ENCODE measurements at regions of chr19 and their contacts with region 1.

Region 1: GRCh38 chr19:41310033-41310758 is at the start of gene CCDC97:
- DNase-seq: peak; percentile 78 to 96 (median 90)
- ATAC-seq: peak; percentile 61
- H3K4me3 ChIP-seq: peak within 1 kb of the TSS; percentile 66 to 91
- H3K4me3 Mint-ChIP-seq: peak within 1 kb of the TSS; percentile 97
- H3K27ac ChIP-seq: peak within 1 kb of the TSS; percentile 88 to 93
- H3K27ac Mint-ChIP-seq: peak within 1 kb of the TSS; percentile 98
- H3K4me1 ChIP-seq: peaks cover 58% of the 10 kb centered on the region
- H3K4me1 Mint-ChIP-seq: peaks cover 74% of the 10 kb centered on the region
- H3K27me3 ChIP-seq: no peaks in the 10 kb centered on the region
- H3K27me3 Mint-ChIP-seq: no peaks in the 10 kb centered on the region
- CTCF ChIP-seq: no peak
- total RNA-seq, gene CCDC97: 32.0 to 33.5 TPM

Region 2: DNA sequence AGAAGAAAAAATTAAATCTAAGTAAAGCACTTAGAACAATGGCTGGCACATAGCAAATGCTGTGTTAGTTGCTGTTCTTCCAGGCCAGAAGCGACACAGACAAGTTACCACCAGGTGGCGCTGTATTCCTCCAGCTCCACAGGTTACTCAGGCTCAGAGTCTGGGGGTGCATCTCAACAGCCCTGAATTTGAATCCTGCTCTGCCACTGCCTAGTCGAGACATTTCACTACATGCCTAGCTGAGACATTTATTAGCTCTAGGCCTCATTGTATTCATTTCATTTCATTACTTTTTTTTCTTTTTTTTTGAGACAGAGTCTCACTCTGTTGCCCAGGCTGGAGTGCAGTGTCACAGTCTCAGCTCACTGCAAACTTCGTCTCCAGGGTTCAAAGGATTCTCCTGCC is 335.6 kb before region 1 on chr19:
- CTCF ChIA-PET with region 1: no interaction called
- POLR2A ChIA-PET with region 1: no interaction called
- intact Hi-C with region 1: loop called (anchors 2 kb)
- DNase-seq: peak; percentile 61 to 90 (median 80)
- ATAC-seq: peak; percentile 72
- H3K4me3 ChIP-seq: no peak overlapping the region
- H3K4me3 Mint-ChIP-seq: no peak overlapping the region
- H3K27ac ChIP-seq: no peak overlapping the region
- H3K27ac Mint-ChIP-seq: no peak overlapping the region
- H3K4me1 ChIP-seq: peaks cover 22% of the 10 kb centered on the region
- H3K4me1 Mint-ChIP-seq: peaks cover 29% of the 10 kb centered on the region
- H3K27me3 ChIP-seq: no peaks in the 10 kb centered on the region
- H3K27me3 Mint-ChIP-seq: peaks cover 10% of the 10 kb centered on the region
- CTCF ChIP-seq: peak; percentile 92

Region 3: DNA sequence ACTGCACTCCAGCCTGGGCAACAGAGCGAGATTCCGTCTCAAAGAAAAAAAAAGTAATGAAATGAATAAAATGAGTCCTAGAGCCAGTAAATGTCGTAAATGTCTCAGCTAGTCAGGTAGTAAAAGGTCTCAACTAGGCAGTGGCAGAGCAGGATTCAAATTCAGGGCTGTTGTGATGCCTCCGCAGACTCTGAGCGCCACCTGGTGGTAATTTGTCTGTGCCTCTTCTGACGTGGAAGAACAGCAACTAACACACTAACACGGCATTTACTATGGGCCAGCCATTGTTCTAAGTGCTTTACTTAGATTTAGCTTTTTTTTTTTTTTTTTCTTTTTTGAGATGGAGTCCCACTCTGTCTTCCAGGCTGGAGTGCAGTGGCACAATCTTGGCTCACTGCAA is 165.8 kb before region 1 on chr19:
- CTCF ChIA-PET with region 1: interaction called, 3 read pairs
- POLR2A ChIA-PET with region 1: no interaction called
- intact Hi-C with region 1: loop called in 1 of 2 experiments (anchors 10 kb)
- DNase-seq: peak; percentile 79 to 94 (median 90)
- ATAC-seq: peak; percentile 95
- H3K4me3 ChIP-seq: no peak overlapping the region
- H3K4me3 Mint-ChIP-seq: no peak overlapping the region
- H3K27ac ChIP-seq: no peak overlapping the region
- H3K27ac Mint-ChIP-seq: no peak overlapping the region
- H3K4me1 ChIP-seq: no peaks in the 10 kb centered on the region
- H3K4me1 Mint-ChIP-seq: peaks cover 2% of the 10 kb centered on the region
- H3K27me3 ChIP-seq: peaks cover 0 to 6% of the 10 kb centered on the region in 2 experiments
- H3K27me3 Mint-ChIP-seq: peaks cover 10% of the 10 kb centered on the region
- CTCF ChIP-seq: peak; percentile 81

Region 4: DNA sequence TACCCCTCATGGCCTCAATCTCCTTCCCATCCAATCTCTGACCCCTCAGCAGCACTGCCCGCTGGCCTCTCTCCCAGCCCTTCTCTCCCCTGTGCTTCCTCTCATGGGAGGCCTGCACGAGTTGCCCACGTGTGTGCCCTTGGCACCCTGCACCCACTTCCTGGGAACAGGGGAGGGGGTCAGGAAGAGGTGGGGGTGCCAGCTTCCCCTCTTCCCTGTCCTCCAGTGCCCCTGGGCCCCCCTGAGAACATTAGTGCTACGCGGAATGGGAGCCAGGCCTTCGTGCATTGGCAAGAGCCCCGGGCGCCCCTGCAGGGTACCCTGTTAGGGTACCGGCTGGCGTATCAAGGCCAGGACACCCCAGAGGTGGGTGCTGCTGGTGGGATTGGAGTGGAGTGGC is 72.0 kb before region 1 on chr19:
- CTCF ChIA-PET with region 1: no interaction called
- POLR2A ChIA-PET with region 1: no interaction called
- intact Hi-C with region 1: no loop called
- DNase-seq: no peak
- ATAC-seq: no peak
- H3K4me3 ChIP-seq: no peak overlapping the region
- H3K4me3 Mint-ChIP-seq: no peak overlapping the region
- H3K27ac ChIP-seq: no peak overlapping the region
- H3K27ac Mint-ChIP-seq: no peak overlapping the region
- H3K4me1 ChIP-seq: no peaks in the 10 kb centered on the region
- H3K4me1 Mint-ChIP-seq: no peaks in the 10 kb centered on the region
- H3K27me3 ChIP-seq: no peaks in the 10 kb centered on the region
- H3K27me3 Mint-ChIP-seq: no peaks in the 10 kb centered on the region
- CTCF ChIP-seq: no peak

Region 5: GRCh38 chr19:41288673-41289505 is 21.3 kb before region 1 on chr19:
- CTCF ChIA-PET with region 1: interaction called, 14 read pairs
- POLR2A ChIA-PET with region 1: interaction called, 3 read pairs
- intact Hi-C with region 1: no loop called
- DNase-seq: no peak
- ATAC-seq: no peak
- H3K4me3 ChIP-seq: no peak overlapping the region
- H3K4me3 Mint-ChIP-seq: no peak overlapping the region
- H3K27ac ChIP-seq: no peak overlapping the region
- H3K27ac Mint-ChIP-seq: no peak overlapping the region
- H3K4me1 ChIP-seq: no peaks in the 10 kb centered on the region
- H3K4me1 Mint-ChIP-seq: peaks cover 7% of the 10 kb centered on the region
- H3K27me3 ChIP-seq: no peaks in the 10 kb centered on the region
- H3K27me3 Mint-ChIP-seq: no peaks in the 10 kb centered on the region
- CTCF ChIP-seq: no peak

Region 6: GRCh38 chr19:41321600-41322270 is 11.5 kb after region 1 on chr19:
- CTCF ChIA-PET with region 1: interaction called, 14 read pairs
- POLR2A ChIA-PET with region 1: interaction called, 5 read pairs
- intact Hi-C with region 1: no loop called
- DNase-seq: peak in 3 of 9 experiments; percentile 27 to 60 (median 47)
- ATAC-seq: no peak
- H3K4me3 ChIP-seq: no peak overlapping the region
- H3K4me3 Mint-ChIP-seq: no peak overlapping the region
- H3K27ac ChIP-seq: peak overlapping the region in 1 of 2 experiments; percentile 63
- H3K27ac Mint-ChIP-seq: peak overlapping the region; percentile 85
- H3K4me1 ChIP-seq: peaks cover 32% of the 10 kb centered on the region
- H3K4me1 Mint-ChIP-seq: peaks cover 44% of the 10 kb centered on the region
- H3K27me3 ChIP-seq: no peaks in the 10 kb centered on the region
- H3K27me3 Mint-ChIP-seq: no peaks in the 10 kb centered on the region
- CTCF ChIP-seq: no peak

Region 7: DNA sequence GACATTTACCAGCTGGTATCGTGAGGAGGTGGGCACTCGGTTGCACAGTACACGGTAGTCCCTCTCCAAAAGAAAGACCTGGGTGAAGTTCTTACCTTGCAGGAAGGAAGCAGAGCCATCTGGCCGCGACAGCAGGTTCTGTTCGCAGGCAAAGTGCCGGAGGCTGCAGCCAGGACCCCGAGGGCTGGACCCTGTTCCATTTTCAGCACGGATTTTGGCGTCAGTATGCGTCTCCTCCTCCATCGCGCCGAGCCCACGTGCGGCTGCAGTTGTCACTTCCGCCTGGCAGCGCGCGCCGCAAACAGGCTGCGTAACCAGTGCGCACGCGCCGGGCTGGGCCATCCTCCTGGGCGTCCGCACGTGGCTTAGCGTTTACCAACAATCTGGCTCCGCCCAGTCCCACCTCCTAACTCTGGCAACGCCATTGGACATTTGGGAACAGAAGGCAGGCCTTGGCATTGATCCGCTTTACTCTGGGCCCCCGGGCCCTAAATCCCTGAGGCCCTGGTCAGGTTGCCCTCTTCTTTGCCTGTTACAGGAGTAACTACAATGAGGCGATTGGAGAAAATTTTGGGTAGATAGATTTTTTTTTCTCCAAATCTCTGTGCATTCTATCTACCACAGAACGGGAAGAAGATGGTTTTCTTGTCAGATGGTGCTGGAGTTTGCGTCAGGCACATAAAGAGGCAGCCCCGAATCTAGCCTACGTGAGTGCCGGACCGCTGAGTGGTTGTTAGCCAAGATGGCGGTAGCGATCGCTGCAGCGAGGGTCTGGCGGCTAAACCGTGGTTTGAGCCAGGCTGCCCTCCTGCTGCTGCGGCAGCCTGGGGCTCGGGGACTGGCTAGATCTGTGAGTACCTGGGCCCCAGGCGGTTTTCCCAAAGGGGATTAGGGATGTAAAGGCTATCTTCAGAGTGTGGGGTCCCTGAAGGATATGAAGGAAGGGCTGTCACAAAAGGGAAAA is 87.2 kb after region 1 on chr19 and contains the starts of genes BCKDHA and EXOSC5:
- CTCF ChIA-PET with region 1: no interaction called
- POLR2A ChIA-PET with region 1: no interaction called
- intact Hi-C with region 1: loop called in 1 of 2 experiments (anchors 1 kb)
- DNase-seq: peak; percentile 97 to 100 (median 99)
- ATAC-seq: peak; percentile 97
- H3K4me3 ChIP-seq: peak within 1 kb of the TSS; percentile 84 to 97
- H3K4me3 Mint-ChIP-seq: peak within 1 kb of the TSS; percentile 98
- H3K27ac ChIP-seq: peak within 1 kb of the TSS; percentile 98
- H3K27ac Mint-ChIP-seq: peak within 1 kb of the TSS; percentile 100
- H3K4me1 ChIP-seq: peaks cover 28% of the 10 kb centered on the region
- H3K4me1 Mint-ChIP-seq: peaks cover 47% of the 10 kb centered on the region
- H3K27me3 ChIP-seq: no peaks in the 10 kb centered on the region
- H3K27me3 Mint-ChIP-seq: no peaks in the 10 kb centered on the region
- CTCF ChIP-seq: no peak
- total RNA-seq, gene BCKDHA: 19.4 to 20.5 TPM
- total RNA-seq, gene EXOSC5: 4.1 to 5.5 TPM

Measured in CD8-positive, alpha-beta T cell (primary cell).